HEK293 (cell line): ENCODE measurements at regions of chr7 and their contacts with region 1.

Region 1: DNA sequence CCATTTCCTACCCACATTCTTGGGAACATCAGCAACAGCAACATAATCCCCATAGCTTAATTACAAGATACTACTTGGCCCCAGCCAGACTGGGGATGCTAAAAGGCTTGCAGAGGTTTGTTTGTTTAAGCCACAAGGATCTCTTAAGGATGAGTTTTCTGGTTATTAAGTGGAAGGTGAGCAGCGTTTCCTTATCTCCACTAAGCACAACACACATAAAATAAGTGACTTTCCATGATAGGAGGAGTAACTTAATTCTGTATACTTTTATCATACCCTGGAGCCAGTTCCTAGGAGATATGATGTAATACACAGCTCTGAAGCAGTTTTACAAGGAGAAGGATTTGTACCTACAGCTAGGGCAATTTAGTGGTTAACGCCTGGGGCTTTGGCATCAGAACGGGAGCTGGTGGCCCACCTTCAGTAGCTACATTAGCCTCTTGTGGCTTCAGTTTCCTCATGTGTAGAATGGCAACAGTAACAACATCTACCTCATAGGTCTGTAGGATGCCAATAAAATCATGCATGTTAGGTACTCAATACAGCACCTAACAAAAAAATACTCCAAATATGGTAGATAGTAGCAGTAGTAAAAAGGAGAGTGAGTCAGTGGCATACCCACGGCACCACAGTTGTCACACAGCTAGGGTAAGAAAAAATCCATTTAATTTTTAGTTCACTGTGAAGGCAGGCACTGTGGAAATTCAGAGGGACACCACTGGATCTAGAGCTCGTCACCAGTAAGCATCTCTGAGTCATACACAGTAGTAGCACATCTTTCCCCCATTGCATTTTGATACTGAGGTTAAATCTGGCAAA is 55.2 kb downstream of the DOCK4 start:
- H3K4me3 ChIP-seq: no peak overlapping the region
- H3K27ac ChIP-seq: peak overlapping the region; percentile 53
- H3K4me1 ChIP-seq: peaks cover 22% of the 10 kb centered on the region
- CTCF ChIP-seq: no peak

Region 2: GRCh38 chr7:112206238-112207044 is 55.4 kb after region 1 on chr7 and contains the starts of genes DOCK4 and ZNF277:
- CTCF ChIA-PET with region 1: interaction called, 3 read pairs
- POLR2A ChIA-PET with region 1: interaction called, 24 read pairs
- H3K4me3 ChIP-seq: peak within 1 kb of the TSS; percentile 94
- H3K27ac ChIP-seq: peak within 1 kb of the TSS; percentile 87
- H3K4me1 ChIP-seq: peaks cover 10% of the 10 kb centered on the region
- CTCF ChIP-seq: no peak